MCF 10A (cell line): ENCODE measurements at regions of chr4 and their contacts with region 1.

Region 1: DNA sequence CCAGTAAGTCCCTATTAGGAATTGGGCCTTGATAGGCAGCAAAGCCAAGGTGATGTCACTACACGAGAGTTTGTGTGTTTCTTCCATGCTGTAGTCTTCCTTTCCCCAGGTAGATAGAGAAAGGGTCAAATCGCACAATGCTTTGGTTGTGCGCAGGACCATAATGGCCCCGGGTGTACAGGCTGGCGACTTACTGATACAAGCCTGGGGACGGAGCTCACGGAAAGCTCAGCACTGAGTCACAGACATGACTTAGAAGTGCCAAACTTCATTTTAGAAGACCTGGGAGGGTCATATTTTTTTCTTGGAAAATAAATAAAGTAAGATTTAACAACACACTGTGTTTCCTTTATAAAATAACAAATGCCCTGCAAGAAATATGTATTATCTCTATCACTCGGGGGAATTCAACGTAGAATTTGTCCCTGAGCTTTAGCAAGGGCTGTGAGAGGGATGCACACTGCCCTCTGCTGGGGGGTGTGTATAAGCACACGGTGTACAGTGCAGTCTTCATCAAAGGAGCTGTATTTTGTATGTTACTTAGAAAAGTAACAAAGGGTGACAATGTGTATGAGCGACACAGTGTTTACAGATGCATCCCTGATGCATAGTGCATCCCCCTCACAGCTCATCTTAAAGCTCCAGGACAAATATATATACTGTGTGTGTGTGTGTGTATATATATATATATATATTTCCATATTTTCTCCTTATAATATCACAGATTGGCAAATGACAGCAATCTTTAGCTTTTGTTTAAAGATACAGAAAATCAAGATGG is 254.5 kb upstream of the VEGFC start:
- DNase-seq: peak; percentile 87
- H3K4me3 Mint-ChIP-seq: no peak overlapping the region
- H3K27ac Mint-ChIP-seq: no peak overlapping the region
- H3K4me1 Mint-ChIP-seq: no peaks in the 10 kb centered on the region
- H3K27me3 Mint-ChIP-seq: no peaks in the 10 kb centered on the region
- CTCF ChIP-seq: peak; percentile 72

Region 2: GRCh38 chr4:176377780-176378179 is 669.5 kb before region 1 on chr4:
- CTCF ChIA-PET with region 1: interaction called, 58 read pairs
- POLR2A ChIA-PET with region 1: interaction called, 7 read pairs
- intact Hi-C with region 1: loop called (anchors 1 kb)
- DNase-seq: peak; percentile 40
- H3K4me3 Mint-ChIP-seq: no peak overlapping the region
- H3K27ac Mint-ChIP-seq: no peak overlapping the region
- H3K4me1 Mint-ChIP-seq: peaks cover 8% of the 10 kb centered on the region
- H3K27me3 Mint-ChIP-seq: no peaks in the 10 kb centered on the region
- CTCF ChIP-seq: peak; percentile 72

Region 3: DNA sequence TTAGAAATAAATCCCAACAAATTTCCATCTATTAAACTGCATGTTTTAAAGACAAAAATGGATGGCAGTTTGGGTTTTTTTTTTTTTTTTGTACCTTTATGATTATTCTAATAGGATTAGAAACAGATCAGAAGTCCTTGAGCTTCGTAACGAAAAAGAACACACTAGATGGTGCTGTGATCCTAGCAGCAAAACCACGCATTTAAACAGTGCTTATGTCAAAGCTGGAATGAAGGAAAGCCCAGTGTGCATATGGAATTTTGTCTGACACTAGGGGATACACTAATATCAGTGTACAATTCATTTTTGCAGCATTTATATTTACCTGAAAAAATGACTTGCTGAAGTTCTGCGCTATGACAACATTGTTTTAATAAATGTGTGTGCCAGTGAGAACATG is 483.7 kb before region 1 on chr4:
- CTCF ChIA-PET with region 1: interaction called, 21 read pairs
- POLR2A ChIA-PET with region 1: no interaction called
- intact Hi-C with region 1: loop called (anchors 1 kb)
- DNase-seq: peak; percentile 35
- H3K4me3 Mint-ChIP-seq: no peak overlapping the region
- H3K27ac Mint-ChIP-seq: no peak overlapping the region
- H3K4me1 Mint-ChIP-seq: peaks cover 5% of the 10 kb centered on the region
- H3K27me3 Mint-ChIP-seq: no peaks in the 10 kb centered on the region
- CTCF ChIP-seq: peak; percentile 10

Region 4: DNA sequence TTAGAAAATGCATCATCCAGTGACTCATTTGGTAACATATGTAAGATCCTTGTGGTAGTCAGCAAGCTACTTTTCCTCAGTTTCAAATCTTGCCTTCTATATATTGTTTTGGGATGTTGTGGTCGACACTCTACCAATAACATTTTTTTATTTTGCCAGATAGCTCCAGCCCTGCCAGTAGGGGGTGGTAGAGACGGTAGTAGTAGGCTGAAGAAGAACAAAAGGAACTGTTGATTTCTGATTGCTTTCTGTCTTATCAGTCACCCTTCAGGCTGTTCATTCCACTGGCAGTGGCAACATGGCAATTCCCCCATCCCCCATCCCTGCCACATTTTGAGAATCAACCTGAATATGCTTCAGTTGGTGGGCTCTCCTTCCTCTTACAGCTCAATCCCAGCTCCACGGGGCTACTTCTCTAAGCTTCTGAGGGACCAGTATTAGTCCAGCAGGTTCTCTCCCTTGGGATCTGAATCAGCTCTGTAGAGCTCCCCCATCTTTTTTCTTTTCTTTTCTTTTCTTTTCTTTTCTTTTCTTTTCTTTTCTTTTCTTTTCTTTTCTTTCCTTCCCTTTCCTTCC is 83.1 kb before region 1 on chr4:
- CTCF ChIA-PET with region 1: interaction called, 26 read pairs
- POLR2A ChIA-PET with region 1: interaction called, 6 read pairs
- intact Hi-C with region 1: loop called (anchors 1 kb)
- DNase-seq: peak; percentile 59
- H3K4me3 Mint-ChIP-seq: no peak overlapping the region
- H3K27ac Mint-ChIP-seq: peak overlapping the region; percentile 80
- H3K4me1 Mint-ChIP-seq: peaks cover 8% of the 10 kb centered on the region
- H3K27me3 Mint-ChIP-seq: no peaks in the 10 kb centered on the region
- CTCF ChIP-seq: peak; percentile 36

Region 5: DNA sequence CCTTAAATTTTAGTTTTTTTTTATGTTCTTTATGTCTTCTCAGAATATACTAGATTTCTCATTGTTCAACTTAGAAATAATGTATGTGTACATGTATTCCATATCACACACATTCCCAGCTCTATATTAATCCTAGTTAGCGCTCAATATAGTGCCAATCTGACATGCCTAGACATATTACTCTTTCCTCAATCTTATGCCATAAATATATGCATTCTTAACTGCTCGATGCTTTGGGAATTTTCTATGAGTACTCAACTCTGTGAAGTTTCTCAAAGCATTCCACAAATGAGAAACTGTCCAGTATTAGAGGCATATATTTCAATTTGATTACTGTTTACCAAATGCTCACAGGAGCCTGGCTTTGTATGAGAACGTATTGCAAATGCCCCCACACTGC is 23.3 kb before region 1 on chr4:
- CTCF ChIA-PET with region 1: interaction called, 10 read pairs
- POLR2A ChIA-PET with region 1: interaction called, 3 read pairs
- intact Hi-C with region 1: no loop called
- DNase-seq: no peak
- H3K4me3 Mint-ChIP-seq: no peak overlapping the region
- H3K27ac Mint-ChIP-seq: peak overlapping the region; percentile 75
- H3K4me1 Mint-ChIP-seq: peaks cover 11% of the 10 kb centered on the region
- H3K27me3 Mint-ChIP-seq: no peaks in the 10 kb centered on the region
- CTCF ChIP-seq: no peak

Region 6: DNA sequence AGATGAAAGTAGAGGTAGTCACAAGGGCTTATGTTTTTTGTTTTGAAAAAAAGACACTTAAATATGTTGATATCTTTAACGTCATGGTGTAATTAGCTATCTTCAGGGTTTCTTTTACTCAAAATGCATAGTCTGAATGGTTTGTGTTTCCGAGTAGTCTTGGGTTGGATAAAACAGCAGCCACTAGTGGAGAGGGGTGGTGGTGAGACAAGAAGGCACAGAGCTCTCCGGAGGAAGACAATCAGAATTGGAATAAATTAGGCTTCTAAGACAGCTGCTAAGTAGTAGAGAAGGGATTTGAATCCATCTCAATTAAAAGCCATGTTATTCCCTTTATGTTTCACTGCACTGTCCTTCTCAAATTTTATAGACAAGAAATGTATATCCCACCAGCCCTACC is 14.1 kb before region 1 on chr4:
- CTCF ChIA-PET with region 1: interaction called, 22 read pairs
- POLR2A ChIA-PET with region 1: interaction called, 3 read pairs
- intact Hi-C with region 1: no loop called
- DNase-seq: no peak
- H3K4me3 Mint-ChIP-seq: no peak overlapping the region
- H3K27ac Mint-ChIP-seq: no peak overlapping the region
- H3K4me1 Mint-ChIP-seq: no peaks in the 10 kb centered on the region
- H3K27me3 Mint-ChIP-seq: no peaks in the 10 kb centered on the region
- CTCF ChIP-seq: no peak

Region 7: GRCh38 chr4:177339477-177340374 is 292.5 kb after region 1 on chr4:
- CTCF ChIA-PET with region 1: interaction called, 15 read pairs
- POLR2A ChIA-PET with region 1: no interaction called
- intact Hi-C with region 1: loop called (anchors 5 kb)
- DNase-seq: peak; percentile 55
- H3K4me3 Mint-ChIP-seq: no peak overlapping the region
- H3K27ac Mint-ChIP-seq: peak overlapping the region; percentile 46
- H3K4me1 Mint-ChIP-seq: peaks cover 11% of the 10 kb centered on the region
- H3K27me3 Mint-ChIP-seq: no peaks in the 10 kb centered on the region
- CTCF ChIP-seq: peak; percentile 73